Posterior cingulate gyrus (tissue), 11 donors: ENCODE measurements at regions of chr3 and their contacts with region 1.

Region 1: DNA sequence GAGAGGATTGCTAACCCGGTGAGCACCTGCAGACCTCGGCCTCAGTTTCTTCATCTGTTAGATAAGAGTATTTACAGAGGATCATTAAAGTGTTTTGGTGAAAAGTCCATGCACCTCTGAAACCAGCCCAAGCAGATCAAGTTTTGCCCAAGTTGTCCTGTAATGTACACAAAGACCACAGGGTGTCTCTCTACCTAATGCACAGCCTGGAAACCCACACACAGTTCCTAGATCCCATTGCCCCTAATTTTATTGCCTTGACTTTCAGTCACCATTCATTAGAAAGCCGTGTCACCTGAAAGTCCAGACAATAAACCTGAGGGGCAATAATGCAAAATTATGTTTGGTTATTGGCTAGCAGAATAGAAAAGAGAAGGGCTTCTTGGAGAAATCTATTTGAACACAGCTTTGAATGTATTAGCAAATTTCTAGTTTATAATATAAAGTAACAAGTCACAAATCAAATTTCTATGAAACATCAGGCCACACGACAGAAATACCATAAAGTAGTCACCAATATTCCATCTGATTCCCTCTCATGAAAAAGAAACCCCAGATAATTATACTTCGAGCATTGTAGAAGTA is 161.3 kb upstream of the SLC2A2 start:
- DNase-seq: peak in 1 of 10 donors; percentile 24

Region 2: GRCh38 chr3:170961616-170962400 is 226.0 kb before region 1 on chr3:
- intact Hi-C with region 1: loop called (anchors 2 kb)
- DNase-seq: peak in 4 of 10 donors; percentile 10 to 77 (median 36)

Region 3: DNA sequence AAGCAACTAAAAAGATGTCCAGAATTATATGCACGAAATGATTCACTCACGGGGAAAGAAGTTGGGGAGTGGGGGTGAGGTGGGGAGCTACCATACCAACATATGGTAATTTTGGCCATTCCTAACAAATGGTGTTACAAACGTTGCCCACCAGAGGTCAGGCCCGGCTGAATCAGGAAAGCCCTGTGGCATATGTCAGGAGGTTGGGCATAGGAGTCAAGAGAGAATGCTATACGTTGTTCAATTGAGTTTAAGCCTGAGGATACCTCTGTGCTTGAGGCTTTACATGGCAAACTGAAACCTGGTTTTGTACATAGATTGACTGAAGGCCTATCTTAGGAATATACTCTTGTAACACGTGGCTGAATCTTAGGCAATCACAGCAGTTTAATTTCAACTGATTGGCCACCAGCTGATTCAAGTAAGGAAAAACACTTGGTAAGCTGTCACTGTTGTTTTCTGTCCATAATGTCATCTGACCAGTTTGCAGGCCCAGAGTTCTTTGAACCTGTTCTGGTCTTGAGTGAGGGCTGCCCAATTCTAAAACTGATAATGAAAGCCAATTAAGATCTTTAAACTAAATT is 137.8 kb before region 1 on chr3:
- intact Hi-C with region 1: loop called (anchors 1 kb)
- DNase-seq: peak in 7 of 10 donors; percentile 25 to 92 (median 53)

Region 4: DNA sequence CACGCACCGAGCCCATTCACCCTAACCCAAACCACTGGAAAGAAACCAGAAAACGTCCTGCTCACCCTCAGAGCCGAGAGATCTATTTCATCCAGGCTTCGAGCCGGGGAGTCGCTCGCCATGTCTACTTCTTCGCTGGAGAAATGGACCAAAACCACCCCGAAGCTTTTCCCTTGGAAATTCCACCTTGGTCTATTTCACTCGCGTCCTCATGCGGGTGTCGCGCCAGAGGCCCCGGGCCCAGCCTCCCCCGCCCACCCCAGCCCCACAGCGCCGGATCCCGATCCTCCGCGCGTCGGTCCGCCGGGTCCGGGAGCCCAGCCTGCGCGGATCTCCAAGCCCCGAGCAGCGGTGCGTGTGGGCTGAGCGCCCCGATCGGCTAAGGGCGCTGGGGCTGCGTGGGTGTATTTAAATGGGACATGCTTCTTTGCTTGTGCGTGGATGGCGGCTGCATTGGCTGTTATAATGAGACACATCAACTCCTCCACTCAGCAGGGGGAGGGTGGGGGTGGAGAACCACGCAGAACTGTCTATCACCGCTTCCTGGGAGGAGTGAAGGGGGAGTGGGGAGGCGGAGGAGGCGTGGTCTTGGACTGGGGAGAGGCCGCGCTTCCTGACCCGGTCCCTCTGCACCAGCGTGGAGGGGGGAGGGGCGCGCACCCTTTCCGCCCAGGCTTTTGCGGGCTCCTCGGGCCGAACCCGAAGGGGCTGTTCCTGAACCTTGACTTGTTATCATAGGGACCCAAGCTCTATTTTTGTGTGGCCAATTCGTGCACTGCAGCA is 272.3 kb after region 1 on chr3 and contains the start of gene TNIK:
- intact Hi-C with region 1: loop called (anchors 2 kb)
- DNase-seq: peak; percentile 88 to 99 (median 92)

Region 5: DNA sequence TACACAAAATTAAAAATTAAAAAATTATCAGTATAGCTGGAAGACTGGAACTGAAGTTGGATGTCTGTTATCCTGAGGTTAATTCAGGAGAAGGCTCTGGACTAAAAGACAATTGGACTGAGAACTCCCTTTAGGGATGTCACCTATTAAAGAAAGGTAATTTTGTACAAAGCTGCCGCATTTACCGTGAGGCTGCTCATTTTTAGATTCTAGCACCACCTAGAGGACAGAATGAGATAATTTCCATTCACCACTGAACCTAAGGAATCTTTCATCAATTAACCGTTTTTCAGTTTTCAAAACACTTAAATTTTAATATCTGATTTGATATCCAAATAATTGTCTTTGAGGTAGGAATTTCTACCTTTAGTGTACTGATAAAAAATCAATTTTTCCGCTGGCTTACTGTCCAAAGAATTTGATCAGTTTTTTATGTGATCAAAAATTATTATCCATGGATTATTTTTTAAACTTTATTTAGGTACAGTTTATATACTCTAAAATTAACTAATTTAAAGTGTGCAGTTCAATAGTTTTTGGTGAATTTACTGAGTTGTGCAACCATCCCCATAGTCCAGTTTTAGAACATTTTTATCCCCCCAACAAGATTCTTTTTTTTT is 379.1 kb after region 1 on chr3:
- intact Hi-C with region 1: loop called (anchors 2 kb)
- DNase-seq: no peak

Region 6: GRCh38 chr3:171838218-171838761 is 650.5 kb after region 1 on chr3:
- intact Hi-C with region 1: loop called (anchors 5 kb)
- DNase-seq: peak in 9 of 10 donors; percentile 17 to 90 (median 45)